ENCODE measurements at regions of chr12 and their contacts with region 1.

Region 1: DNA sequence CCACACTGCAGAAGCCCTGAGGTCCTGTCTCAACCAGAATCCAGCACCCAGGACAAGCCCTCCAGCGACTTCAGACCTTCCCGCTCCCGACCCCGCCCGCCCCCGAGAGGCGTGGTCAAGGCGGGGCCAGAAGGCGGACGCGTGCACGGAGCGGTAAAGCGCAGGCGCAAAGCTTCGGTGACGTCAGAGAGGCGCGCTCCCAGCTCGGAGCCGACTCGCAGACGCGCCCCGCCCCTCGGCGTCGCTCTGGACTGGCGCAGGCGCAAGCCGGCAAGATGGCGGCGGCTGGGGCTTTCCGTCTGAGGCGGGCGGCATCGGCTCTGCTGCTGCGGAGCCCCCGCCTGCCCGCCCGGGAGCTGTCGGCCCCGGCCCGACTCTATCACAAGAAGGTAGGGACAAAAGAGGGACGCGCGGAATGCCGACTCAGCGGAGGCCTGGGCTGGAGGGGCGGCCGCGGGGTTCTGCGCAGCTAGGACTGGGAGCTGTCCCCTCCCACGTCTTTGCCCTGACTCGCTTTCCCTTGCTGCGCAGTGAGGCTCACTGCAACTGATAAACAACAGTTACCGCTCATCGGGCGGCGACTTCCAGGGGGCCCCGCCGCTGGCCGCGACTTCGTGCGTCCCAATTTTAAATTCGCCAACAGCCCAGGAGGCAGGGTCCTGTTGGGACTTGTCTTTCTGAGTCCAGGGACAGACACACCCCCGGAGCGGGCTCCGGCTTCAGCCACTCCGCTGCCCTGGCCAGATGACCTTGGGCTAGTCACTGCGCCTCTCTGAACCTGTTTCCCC is at the start of gene ISCU:
- DNase-seq: peak; percentile 97 to 100 (median 99)
- ATAC-seq: peak; percentile 84
- H3K4me3 ChIP-seq: peak within 1 kb of the TSS; percentile 96
- H3K4me3 Mint-ChIP-seq: peak within 1 kb of the TSS; percentile 94 to 100 (median 100)
- H3K27ac ChIP-seq: peak within 1 kb of the TSS; percentile 98
- H3K27ac Mint-ChIP-seq: peak within 1 kb of the TSS; percentile 98 to 100 (median 99)
- H3K4me1 ChIP-seq: peaks cover 27 to 46% of the 10 kb centered on the region in 2 donors
- H3K4me1 Mint-ChIP-seq: peaks cover 26 to 76% (median 63%) of the 10 kb centered on the region in 7 donors
- H3K27me3 ChIP-seq: no peaks in the 10 kb centered on the region
- H3K27me3 Mint-ChIP-seq: no peaks in the 10 kb centered on the region
- total RNA-seq, gene ISCU: 51.7 to 212 (median 191) TPM

Region 2: DNA sequence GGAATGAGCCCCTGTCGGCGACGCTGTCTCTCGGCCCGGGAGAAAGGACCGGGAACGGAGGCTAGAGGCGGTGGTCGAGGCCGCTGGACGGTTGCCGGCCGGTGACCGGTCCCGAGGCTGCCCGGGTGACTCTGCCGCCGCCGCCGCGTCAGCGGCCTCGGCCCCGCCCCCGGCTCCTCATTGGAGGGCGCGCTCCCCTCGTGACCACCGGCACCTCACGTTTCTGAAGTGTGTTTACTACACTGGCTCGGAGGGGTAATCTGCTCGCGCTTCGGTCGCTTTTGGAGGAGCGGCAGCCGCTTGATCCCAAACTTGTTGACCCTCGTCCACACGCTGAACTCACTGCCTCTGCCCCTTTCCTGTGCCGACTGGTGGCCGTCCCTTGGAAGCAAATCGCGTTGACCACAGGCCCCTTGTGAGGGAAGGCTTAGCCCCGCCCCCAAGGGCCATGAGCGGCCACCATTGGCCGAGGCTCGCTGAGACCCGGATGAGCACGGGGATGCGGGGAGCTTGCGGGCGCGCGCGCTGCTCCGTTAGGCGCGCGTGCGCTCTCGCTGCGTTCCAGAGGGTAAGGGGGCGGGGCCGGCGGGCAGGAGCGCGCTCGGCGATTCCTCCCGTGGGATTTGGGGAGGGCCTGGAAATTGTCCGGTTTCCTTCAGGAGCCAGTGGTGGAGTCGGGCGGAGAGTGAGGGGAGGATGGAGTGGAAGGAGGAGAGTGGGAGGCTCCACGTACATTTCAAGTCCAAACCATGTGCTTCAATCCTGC is 1468.9 kb before region 1 on chr12 and contains the start of gene CRY1:
- CTCF ChIA-PET with region 1: no interaction called
- POLR2A ChIA-PET with region 1: no interaction called
- intact Hi-C with region 1: loop called in 1 of 2 experiments (anchors 5 kb)
- DNase-seq: peak; percentile 87 to 98 (median 94)
- ATAC-seq: peak; percentile 90
- H3K4me3 ChIP-seq: peak within 1 kb of the TSS; percentile 85
- H3K4me3 Mint-ChIP-seq: no peak within 1 kb of the TSS
- H3K27ac ChIP-seq: peak within 1 kb of the TSS; percentile 99
- H3K27ac Mint-ChIP-seq: no peak within 1 kb of the TSS
- H3K4me1 ChIP-seq: peaks cover 16 to 18% of the 10 kb centered on the region in 2 donors
- H3K4me1 Mint-ChIP-seq: peaks cover 5 to 18% (median 11%) of the 10 kb centered on the region in 7 donors
- H3K27me3 ChIP-seq: no peaks in the 10 kb centered on the region
- H3K27me3 Mint-ChIP-seq: peaks cover 0 to 11% (median 5%) of the 10 kb centered on the region in 5 donors
- total RNA-seq, gene CRY1: 8.0 to 58.4 (median 33.4) TPM

Region 3: GRCh38 chr12:108514973-108515814 is 47.3 kb before region 1 on chr12 and contains the start of gene FICD:
- CTCF ChIA-PET with region 1: interaction called, 4 read pairs
- POLR2A ChIA-PET with region 1: interaction called, 11 read pairs
- intact Hi-C with region 1: loop called (anchors 1 kb)
- DNase-seq: peak; percentile 93 to 99 (median 98)
- ATAC-seq: peak; percentile 96
- H3K4me3 ChIP-seq: peak within 1 kb of the TSS; percentile 81
- H3K4me3 Mint-ChIP-seq: peak within 1 kb of the TSS; percentile 91 to 97 (median 94)
- H3K27ac ChIP-seq: peak within 1 kb of the TSS; percentile 78
- H3K27ac Mint-ChIP-seq: peak within 1 kb of the TSS; percentile 89 to 95 (median 94)
- H3K4me1 ChIP-seq: peaks cover 8% of the 10 kb centered on the region in 2 donors
- H3K4me1 Mint-ChIP-seq: peaks cover 17 to 40% (median 22%) of the 10 kb centered on the region in 7 donors
- H3K27me3 ChIP-seq: no peaks in the 10 kb centered on the region
- H3K27me3 Mint-ChIP-seq: peaks cover 0 to 2% (median 0%) of the 10 kb centered on the region in 5 donors
- total RNA-seq, gene FICD: 2.8 to 9.7 (median 6.9) TPM

Region 4: DNA sequence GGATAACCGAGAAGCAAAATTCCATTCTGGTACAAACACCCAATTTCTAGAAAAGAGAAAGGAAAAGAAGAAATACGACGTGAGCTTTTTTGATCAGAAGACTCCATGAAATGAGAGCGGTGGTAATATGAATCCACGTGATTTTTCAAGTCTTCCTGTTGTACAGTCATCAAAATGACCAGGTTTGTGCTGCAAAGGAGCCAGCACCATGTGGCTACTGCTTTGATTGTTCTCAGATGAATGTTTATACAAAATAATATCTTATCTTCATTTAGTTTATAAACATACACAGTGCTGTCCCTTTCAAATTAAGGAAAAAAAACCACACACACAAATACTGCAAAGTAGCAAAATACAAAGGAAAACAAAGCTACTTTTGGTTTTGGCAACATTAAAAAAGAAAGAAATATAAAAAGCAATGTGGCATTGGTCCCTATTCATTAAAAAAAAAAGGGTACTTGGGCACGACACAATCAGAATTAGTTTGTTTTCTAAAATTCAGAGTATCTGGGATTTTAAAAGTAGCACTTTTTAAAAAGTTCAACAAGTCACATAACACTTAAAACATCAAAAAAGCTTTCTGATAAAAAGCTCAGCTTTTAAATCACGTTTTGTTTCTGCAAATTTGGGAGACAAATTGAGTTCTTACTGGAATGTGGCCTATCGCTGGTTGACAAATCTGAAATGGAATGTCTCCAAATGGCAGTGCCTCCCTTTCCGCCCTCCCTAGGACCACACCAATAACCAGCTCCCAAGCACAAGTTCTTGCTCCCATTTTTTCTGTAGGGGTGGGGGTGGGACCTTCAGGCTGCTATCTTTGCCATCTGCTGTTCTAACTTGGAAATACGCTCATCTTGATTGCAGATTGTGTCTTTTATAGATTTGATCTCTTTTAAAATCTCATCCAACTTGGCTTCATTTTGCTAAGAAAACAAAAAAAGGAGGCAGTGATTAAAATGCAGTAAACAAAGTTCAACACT is 84.3 kb after region 1 on chr12:
- CTCF ChIA-PET with region 1: interaction called, 5 read pairs
- POLR2A ChIA-PET with region 1: interaction called, 19 read pairs
- intact Hi-C with region 1: loop called in 1 of 2 experiments (anchors 1 kb)
- DNase-seq: peak in 1 of 9 donors; percentile 26
- ATAC-seq: no peak
- H3K4me3 ChIP-seq: no peak overlapping the region
- H3K4me3 Mint-ChIP-seq: peak overlapping the region; percentile 53 to 89 (median 78)
- H3K27ac ChIP-seq: peak overlapping the region; percentile 50
- H3K27ac Mint-ChIP-seq: peak overlapping the region; percentile 75 to 97 (median 90)
- H3K4me1 ChIP-seq: peaks cover 0 to 27% of the 10 kb centered on the region in 2 donors
- H3K4me1 Mint-ChIP-seq: peaks cover 21 to 37% (median 34%) of the 10 kb centered on the region in 7 donors
- H3K27me3 ChIP-seq: no peaks in the 10 kb centered on the region
- H3K27me3 Mint-ChIP-seq: no peaks in the 10 kb centered on the region

Region 5: GRCh38 chr12:108803428-108804105 is 241.0 kb after region 1 on chr12:
- CTCF ChIA-PET with region 1: interaction called, 74 read pairs
- POLR2A ChIA-PET with region 1: interaction called, 4 read pairs
- intact Hi-C with region 1: loop called (anchors 1 kb)
- DNase-seq: peak; percentile 25 to 78 (median 70)
- ATAC-seq: peak; percentile 93
- H3K4me3 ChIP-seq: no peak overlapping the region
- H3K4me3 Mint-ChIP-seq: no peak overlapping the region
- H3K27ac ChIP-seq: no peak overlapping the region
- H3K27ac Mint-ChIP-seq: peak overlapping the region in 3 of 9 donors; percentile 37 to 62 (median 48)
- H3K4me1 ChIP-seq: peaks cover 0 to 3% of the 10 kb centered on the region in 2 donors
- H3K4me1 Mint-ChIP-seq: peaks cover 0 to 10% (median 3%) of the 10 kb centered on the region in 7 donors
- H3K27me3 ChIP-seq: no peaks in the 10 kb centered on the region
- H3K27me3 Mint-ChIP-seq: no peaks in the 10 kb centered on the region

Region 6: GRCh38 chr12:108838194-108839017 is 275.9 kb after region 1 on chr12:
- CTCF ChIA-PET with region 1: no interaction called
- POLR2A ChIA-PET with region 1: no interaction called
- intact Hi-C with region 1: no loop called
- DNase-seq: peak in 2 of 9 donors; percentile 32 to 73
- ATAC-seq: peak; percentile 93
- H3K4me3 ChIP-seq: no peak overlapping the region
- H3K4me3 Mint-ChIP-seq: peak overlapping the region in 9 of 10 donors; percentile 16 to 76 (median 50)
- H3K27ac ChIP-seq: peak overlapping the region; percentile 10
- H3K27ac Mint-ChIP-seq: peak overlapping the region; percentile 9 to 90 (median 63)
- H3K4me1 ChIP-seq: peaks cover 18% of the 10 kb centered on the region in 2 donors
- H3K4me1 Mint-ChIP-seq: peaks cover 17 to 63% (median 30%) of the 10 kb centered on the region in 7 donors
- H3K27me3 ChIP-seq: no peaks in the 10 kb centered on the region
- H3K27me3 Mint-ChIP-seq: no peaks in the 10 kb centered on the region

Region 7: GRCh38 chr12:109093022-109093918 is 530.7 kb after region 1 on chr12 and contains the start of gene ALKBH2:
- CTCF ChIA-PET with region 1: no interaction called
- POLR2A ChIA-PET with region 1: interaction called, 3 read pairs
- intact Hi-C with region 1: loop called (anchors 1 kb)
- DNase-seq: peak; percentile 91 to 96 (median 93)
- ATAC-seq: peak; percentile 87
- H3K4me3 ChIP-seq: peak within 1 kb of the TSS; percentile 62
- H3K4me3 Mint-ChIP-seq: peak within 1 kb of the TSS; percentile 80 to 93 (median 90)
- H3K27ac ChIP-seq: peak within 1 kb of the TSS; percentile 76
- H3K27ac Mint-ChIP-seq: peak within 1 kb of the TSS; percentile 88 to 96 (median 93)
- H3K4me1 ChIP-seq: peaks cover 18% of the 10 kb centered on the region in 2 donors
- H3K4me1 Mint-ChIP-seq: peaks cover 23 to 43% (median 36%) of the 10 kb centered on the region in 7 donors
- H3K27me3 ChIP-seq: no peaks in the 10 kb centered on the region
- H3K27me3 Mint-ChIP-seq: no peaks in the 10 kb centered on the region
- total RNA-seq, gene ALKBH2: 13.2 to 21.4 (median 17.6) TPM

Region 8: DNA sequence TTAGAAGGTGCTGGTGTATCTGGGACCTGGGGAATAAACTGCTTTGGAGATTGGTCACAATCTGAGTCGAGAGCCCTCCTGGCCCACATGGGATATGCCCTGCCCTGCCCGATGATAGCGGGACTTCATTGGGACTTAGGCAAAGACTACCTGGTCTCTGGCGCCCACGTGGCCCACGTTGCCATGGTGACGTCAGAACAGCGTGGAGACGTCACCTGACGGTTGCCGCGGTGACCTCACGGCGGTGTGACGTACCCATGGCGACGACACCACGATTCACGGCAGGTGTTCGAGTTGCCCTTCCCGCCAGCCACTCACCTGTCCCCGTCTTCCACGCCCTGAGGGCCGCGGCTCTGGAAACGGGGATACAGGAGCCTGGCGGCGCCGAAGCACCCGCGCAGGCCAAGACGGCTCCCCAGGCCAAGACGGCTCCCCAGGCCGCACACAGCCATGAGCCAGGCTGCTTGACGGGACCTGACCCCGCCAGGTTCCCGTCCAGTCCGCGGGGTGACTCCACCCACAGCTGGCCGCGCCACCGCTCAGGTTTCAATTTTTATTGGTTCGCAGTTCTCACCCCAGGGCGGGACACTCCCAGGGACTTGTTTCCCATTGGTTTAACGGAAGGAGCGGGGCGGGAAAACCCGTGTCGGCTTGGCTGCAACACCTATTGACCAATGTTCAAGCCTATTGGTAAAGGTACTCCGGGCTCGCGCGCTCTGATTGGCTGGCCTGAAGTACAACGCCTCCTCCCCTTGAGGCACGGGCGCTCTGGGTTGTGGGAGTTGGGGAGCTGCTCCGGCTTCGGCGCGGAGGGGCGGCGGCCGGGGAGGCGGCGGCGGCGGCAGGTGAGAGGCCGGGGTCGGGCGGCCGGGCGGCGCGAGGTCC is 1010.7 kb after region 1 on chr12 and contains the starts of genes MMAB and MVK:
- CTCF ChIA-PET with region 1: no interaction called
- POLR2A ChIA-PET with region 1: no interaction called
- intact Hi-C with region 1: loop called in 1 of 2 experiments (anchors 2 kb)
- DNase-seq: peak; percentile 87 to 99 (median 99)
- ATAC-seq: peak; percentile 97
- H3K4me3 ChIP-seq: peak within 1 kb of the TSS; percentile 75
- H3K4me3 Mint-ChIP-seq: peak within 1 kb of the TSS; percentile 90 to 97 (median 94)
- H3K27ac ChIP-seq: peak within 1 kb of the TSS; percentile 95
- H3K27ac Mint-ChIP-seq: peak within 1 kb of the TSS; percentile 87 to 100 (median 95)
- H3K4me1 ChIP-seq: peaks cover 13 to 16% of the 10 kb centered on the region in 2 donors
- H3K4me1 Mint-ChIP-seq: peaks cover 9 to 39% (median 36%) of the 10 kb centered on the region in 7 donors
- H3K27me3 ChIP-seq: no peaks in the 10 kb centered on the region
- H3K27me3 Mint-ChIP-seq: no peaks in the 10 kb centered on the region
- total RNA-seq, gene MMAB: 13.5 to 24.7 (median 20.1) TPM
- total RNA-seq, gene MVK: 10.0 to 14.8 (median 11.7) TPM

Measured in naive thymus-derived CD4-positive, alpha-beta T cell (primary cell).